ENCODE measurements at regions of chr6 and their contacts with region 1.

Region 1: GRCh38 chr6:6683969-6684833 is 95.7 kb downstream of the LY86 start:
- DNase-seq: peak; percentile 37
- H3K4me3 Mint-ChIP-seq: peak overlapping the region; percentile 2
- H3K27ac Mint-ChIP-seq: peak overlapping the region; percentile 60
- H3K4me1 Mint-ChIP-seq: peaks cover 88% of the 10 kb centered on the region
- H3K27me3 Mint-ChIP-seq: peaks cover 5% of the 10 kb centered on the region

Region 2: GRCh38 chr6:6696867-6697531 is 12.8 kb after region 1 on chr6:
- CTCF ChIA-PET with region 1: interaction called, 20 read pairs
- DNase-seq: peak; percentile 61
- H3K4me3 Mint-ChIP-seq: no peak overlapping the region
- H3K27ac Mint-ChIP-seq: no peak overlapping the region
- H3K4me1 Mint-ChIP-seq: peaks cover 49% of the 10 kb centered on the region
- H3K27me3 Mint-ChIP-seq: peaks cover 53% of the 10 kb centered on the region